H1 (cell line): ENCODE measurements at regions of chr20 and their contacts with region 1.

Region 1: GRCh38 chr20:22846863-22847262 is 188.2 kb upstream of the SSTR4 start:
- DNase-seq: no peak
- H3K4me3 ChIP-seq: no peak overlapping the region
- H3K27ac ChIP-seq: no peak overlapping the region
- H3K4me1 ChIP-seq: no peaks in the 10 kb centered on the region
- H3K27me3 ChIP-seq: no peaks in the 10 kb centered on the region
- CTCF ChIP-seq: no peak
- EP300 ChIP-seq: no peak
- POLR2A ChIP-seq: no peak
- RAD21 ChIP-seq: no peak

Region 2: DNA sequence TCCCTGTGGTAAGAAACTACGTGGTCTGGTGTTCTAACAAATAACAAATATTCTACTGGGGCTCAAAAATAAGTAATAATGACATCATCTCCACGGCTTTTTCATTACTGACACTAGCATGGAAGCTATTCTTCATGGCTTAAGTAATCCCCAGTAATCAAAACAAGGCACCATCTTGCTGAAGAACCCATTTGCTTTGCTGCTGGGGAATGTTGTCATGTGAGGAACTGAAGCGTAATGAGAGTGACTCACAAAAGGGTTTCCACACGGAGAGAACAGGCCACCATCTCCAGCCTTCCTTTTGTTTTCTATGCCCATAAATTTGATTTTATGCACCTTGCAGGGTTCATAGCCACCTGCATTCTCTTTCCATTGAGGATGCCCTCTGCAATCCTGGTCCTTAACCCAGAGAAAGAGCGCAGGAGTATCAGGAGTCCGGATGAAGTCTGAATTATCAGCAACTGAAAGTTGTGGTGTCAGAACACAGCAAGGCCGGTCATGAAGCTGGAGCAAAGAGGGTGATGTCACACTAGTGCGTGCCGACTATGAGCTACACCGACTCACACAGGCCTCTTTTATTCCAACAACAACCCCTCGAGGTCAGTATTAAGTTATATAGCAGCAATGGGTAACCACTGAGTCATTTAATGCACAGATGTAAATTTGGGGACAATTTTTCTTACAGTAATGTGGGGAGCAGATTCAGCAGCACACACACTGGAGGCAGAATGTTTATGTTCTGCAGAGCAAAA is 14.5 kb after region 1 on chr20:
- CTCF ChIA-PET with region 1: interaction called, 12 read pairs
- POLR2A ChIA-PET with region 1: no interaction called
- DNase-seq: no peak
- H3K4me3 ChIP-seq: no peak overlapping the region
- H3K27ac ChIP-seq: no peak overlapping the region
- H3K4me1 ChIP-seq: no peaks in the 10 kb centered on the region
- H3K27me3 ChIP-seq: peaks cover 0 to 1% (median 0%) of the 10 kb centered on the region in 4 experiments; a peak in 1 of 7 replicates
- CTCF ChIP-seq: no peak
- EP300 ChIP-seq: no peak
- POLR2A ChIP-seq: no peak
- RAD21 ChIP-seq: no peak

Region 3: GRCh38 chr20:22890594-22891300 is 43.9 kb after region 1 on chr20:
- CTCF ChIA-PET with region 1: no interaction called
- POLR2A ChIA-PET with region 1: no interaction called
- DNase-seq: no peak
- H3K4me3 ChIP-seq: no peak overlapping the region
- H3K27ac ChIP-seq: no peak overlapping the region
- H3K4me1 ChIP-seq: no peaks in the 10 kb centered on the region
- H3K27me3 ChIP-seq: no peaks in the 10 kb centered on the region
- CTCF ChIP-seq: no peak
- EP300 ChIP-seq: no peak
- POLR2A ChIP-seq: no peak
- RAD21 ChIP-seq: no peak